ENCODE measurements at regions of chr19 and their contacts with region 1.

Region 1: DNA sequence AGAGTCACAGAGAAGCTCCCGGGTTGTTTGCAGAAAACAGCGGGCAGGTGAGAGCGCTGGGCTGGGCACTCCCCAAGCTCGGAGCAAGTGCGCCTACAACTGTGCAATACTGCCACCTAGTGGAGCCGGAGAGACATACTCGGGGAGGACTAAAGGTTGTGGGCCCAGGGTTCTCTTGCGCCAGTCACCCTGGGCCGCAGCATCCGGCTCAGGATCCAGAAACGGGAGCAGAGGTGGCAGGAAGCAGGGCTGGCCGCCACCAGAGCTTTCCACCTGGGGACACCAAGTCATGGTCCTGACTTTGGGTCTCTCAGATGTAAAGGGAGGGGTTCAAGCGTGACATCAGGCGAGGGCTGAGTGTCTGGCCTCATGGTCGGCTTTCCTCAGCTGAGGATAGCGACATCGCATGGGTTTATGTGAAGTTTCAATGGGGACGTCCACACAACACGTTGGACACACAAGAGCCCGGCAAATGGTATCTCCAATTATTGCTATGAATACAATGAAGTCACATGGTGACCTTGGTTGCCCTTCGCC is 11.2 kb upstream of the KLK4 start:
- DNase-seq: peak; percentile 65
- H3K4me3 ChIP-seq: no peak overlapping the region
- H3K27ac ChIP-seq: no peak overlapping the region
- H3K4me1 ChIP-seq: no peaks in the 10 kb centered on the region
- H3K27me3 ChIP-seq: peaks cover 0 to 3% of the 10 kb centered on the region in 2 experiments
- CTCF ChIP-seq: peak; percentile 83 to 84
- POLR2A ChIP-seq: no peak

Region 2: DNA sequence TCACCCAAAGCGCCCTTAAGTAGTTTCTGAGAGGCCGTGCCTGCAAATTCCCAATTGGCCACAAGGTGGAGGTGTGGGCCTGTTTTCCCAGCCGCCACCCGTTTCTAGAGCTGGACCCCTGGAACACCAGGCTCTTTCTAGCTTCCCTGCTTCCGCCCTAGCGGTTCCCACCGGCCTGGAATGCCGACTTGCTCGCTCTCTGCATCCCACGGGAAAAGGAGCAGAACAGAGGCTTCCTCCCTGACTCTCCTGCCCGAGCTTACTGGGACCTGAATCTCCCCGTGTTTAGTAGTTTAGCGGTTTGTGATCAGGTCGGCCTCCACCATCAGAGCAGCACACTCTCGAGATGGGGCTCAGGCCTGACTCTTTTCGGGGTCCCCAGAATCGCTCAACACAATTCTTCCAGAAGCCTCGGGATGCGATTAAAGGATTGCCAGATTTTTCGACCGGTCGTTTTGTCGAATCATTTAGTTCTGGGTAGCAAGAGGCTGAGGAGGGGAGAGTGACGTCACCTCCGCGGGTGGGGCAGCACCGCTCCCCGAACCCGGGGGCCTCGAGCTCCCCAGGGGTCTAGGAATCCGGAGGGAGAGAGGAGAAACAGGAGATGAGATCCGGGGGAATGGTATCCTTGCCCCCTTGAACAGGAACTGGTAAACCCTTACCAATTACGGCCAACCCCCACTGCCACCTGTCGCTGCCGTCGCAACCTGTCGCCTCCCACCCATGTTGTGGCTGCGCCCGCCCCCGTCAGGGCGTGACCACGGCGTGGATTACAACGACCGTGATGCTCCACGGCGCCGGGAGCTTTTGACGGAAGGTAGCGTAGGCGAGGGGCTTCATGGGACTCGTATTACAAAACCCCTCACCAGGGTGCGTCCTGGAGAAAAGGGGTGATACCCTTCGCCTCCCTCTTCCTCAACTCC is 564.9 kb before region 1 on chr19:
- CTCF ChIA-PET with region 1: interaction called, 17 read pairs
- POLR2A ChIA-PET with region 1: no interaction called
- dilution Hi-C with region 1: no loop called
- intact Hi-C with region 1: loop called (anchors 1 kb)
- DNase-seq: peak; percentile 72
- H3K4me3 ChIP-seq: peak overlapping the region; percentile 24 to 54 (median 31)
- H3K27ac ChIP-seq: peak overlapping the region; percentile 19
- H3K4me1 ChIP-seq: peaks cover 7% of the 10 kb centered on the region
- H3K27me3 ChIP-seq: peaks cover 0 to under 1% of the 10 kb centered on the region in 2 experiments
- CTCF ChIP-seq: peak; percentile 77 to 83
- POLR2A ChIP-seq: no peak

Region 3: GRCh38 chr19:50537762-50538230 is 384.6 kb before region 1 on chr19:
- CTCF ChIA-PET with region 1: interaction called, 129 read pairs
- POLR2A ChIA-PET with region 1: no interaction called
- dilution Hi-C with region 1: no loop called
- intact Hi-C with region 1: loop called (anchors 1 kb)
- DNase-seq: peak; percentile 83
- H3K4me3 ChIP-seq: no peak overlapping the region
- H3K27ac ChIP-seq: no peak overlapping the region
- H3K4me1 ChIP-seq: no peaks in the 10 kb centered on the region
- H3K27me3 ChIP-seq: peaks cover 0 to 2% of the 10 kb centered on the region in 2 experiments
- CTCF ChIP-seq: peak; percentile 93 to 97
- POLR2A ChIP-seq: no peak

Region 4: DNA sequence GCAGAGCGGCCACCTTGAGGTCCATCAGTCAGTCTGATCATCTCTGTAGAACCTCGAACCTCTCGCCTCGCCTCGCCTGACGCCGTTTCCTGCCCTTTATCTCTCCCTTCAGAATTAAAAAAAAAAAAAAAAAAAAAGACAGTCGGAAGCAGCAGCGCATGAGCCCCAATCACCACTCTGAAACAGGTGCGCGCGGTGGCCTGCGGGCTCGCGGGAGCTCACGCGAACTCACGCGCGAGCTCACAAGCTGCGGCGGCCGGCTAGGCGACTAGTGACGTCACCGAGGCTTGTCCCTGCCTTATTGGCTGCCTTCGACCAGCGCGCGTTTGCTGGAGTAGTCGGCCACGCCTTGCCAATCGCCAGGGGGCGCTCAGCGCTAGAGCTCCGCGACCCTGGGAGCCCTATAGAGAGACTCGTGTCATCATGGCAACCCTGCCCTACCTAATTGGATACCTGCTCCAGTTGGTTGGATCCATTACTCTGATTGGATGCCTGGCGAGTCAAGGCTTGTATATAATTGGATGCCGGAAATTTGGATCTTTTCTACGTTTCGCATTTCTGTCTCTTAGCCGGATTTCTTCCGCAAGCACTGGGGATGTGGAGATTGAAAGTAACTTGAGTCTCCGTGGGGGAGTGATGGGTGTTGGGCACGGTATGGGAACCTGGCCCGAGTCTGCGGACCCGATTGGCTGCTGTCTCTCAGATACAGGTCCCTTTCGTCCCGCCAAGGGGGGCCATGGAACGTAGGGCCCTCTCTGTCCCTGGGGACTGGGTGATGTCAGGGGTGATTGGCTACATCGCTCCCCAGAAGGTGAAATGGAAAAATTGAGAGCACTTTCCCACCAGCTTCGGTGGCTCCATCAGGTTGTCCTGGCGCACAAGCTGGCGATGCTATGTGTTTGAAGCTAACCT is 314.3 kb before region 1 on chr19:
- CTCF ChIA-PET with region 1: interaction called, 12 read pairs
- POLR2A ChIA-PET with region 1: no interaction called
- dilution Hi-C with region 1: no loop called
- intact Hi-C with region 1: loop called (anchors 5 kb)
- DNase-seq: peak; percentile 77
- H3K4me3 ChIP-seq: no peak overlapping the region
- H3K27ac ChIP-seq: no peak overlapping the region
- H3K4me1 ChIP-seq: no peaks in the 10 kb centered on the region
- H3K27me3 ChIP-seq: no peaks in the 10 kb centered on the region
- CTCF ChIP-seq: peak; percentile 75 to 83
- POLR2A ChIP-seq: no peak

Region 5: GRCh38 chr19:50705422-50706019 is 216.9 kb before region 1 on chr19:
- CTCF ChIA-PET with region 1: interaction called, 13 read pairs
- POLR2A ChIA-PET with region 1: no interaction called
- dilution Hi-C with region 1: no loop called
- intact Hi-C with region 1: loop called (anchors 5 kb)
- DNase-seq: peak; percentile 62
- H3K4me3 ChIP-seq: no peak overlapping the region
- H3K27ac ChIP-seq: no peak overlapping the region
- H3K4me1 ChIP-seq: peaks cover 18% of the 10 kb centered on the region
- H3K27me3 ChIP-seq: no peaks in the 10 kb centered on the region
- CTCF ChIP-seq: peak; percentile 72 to 81
- POLR2A ChIP-seq: no peak

Region 6: GRCh38 chr19:50823389-50824042 is 98.9 kb before region 1 on chr19 and contains the start of gene KLK1:
- CTCF ChIA-PET with region 1: no interaction called
- POLR2A ChIA-PET with region 1: no interaction called
- dilution Hi-C with region 1: no loop called
- intact Hi-C with region 1: no loop called
- DNase-seq: no peak
- H3K4me3 ChIP-seq: no peak within 1 kb of the TSS
- H3K27ac ChIP-seq: no peak within 1 kb of the TSS
- H3K4me1 ChIP-seq: no peaks in the 10 kb centered on the region
- H3K27me3 ChIP-seq: peaks cover 21% of the 10 kb centered on the region in 2 experiments
- CTCF ChIP-seq: no peak
- POLR2A ChIP-seq: no peak
- total RNA-seq, gene KLK1: not detected in 2 replicates

Region 7: DNA sequence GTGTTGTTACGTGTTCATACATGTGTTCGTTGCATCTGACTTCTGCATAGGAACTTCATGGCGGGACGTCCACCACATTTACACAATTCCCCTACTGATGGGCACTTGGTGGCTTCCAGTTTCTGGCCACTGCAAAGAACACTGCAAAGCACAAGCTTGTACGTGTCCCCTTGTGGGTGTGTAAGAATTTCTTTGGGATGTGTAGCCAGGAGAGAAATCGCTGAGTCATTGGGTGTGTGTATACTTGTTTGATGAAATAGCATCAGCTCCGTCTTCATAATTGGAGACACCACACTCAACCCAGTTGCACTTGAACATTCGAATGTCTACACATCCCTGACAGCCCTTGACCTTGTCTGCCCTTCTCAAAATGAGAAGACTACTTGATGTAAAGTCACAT is 11.3 kb after region 1 on chr19:
- CTCF ChIA-PET with region 1: interaction called, 20 read pairs
- POLR2A ChIA-PET with region 1: no interaction called
- dilution Hi-C with region 1: no loop called
- intact Hi-C with region 1: no loop called
- DNase-seq: no peak
- H3K4me3 ChIP-seq: no peak overlapping the region
- H3K27ac ChIP-seq: no peak overlapping the region
- H3K4me1 ChIP-seq: no peaks in the 10 kb centered on the region
- H3K27me3 ChIP-seq: peaks cover 0 to 2% of the 10 kb centered on the region in 2 experiments
- CTCF ChIP-seq: no peak
- POLR2A ChIP-seq: no peak

Region 8: DNA sequence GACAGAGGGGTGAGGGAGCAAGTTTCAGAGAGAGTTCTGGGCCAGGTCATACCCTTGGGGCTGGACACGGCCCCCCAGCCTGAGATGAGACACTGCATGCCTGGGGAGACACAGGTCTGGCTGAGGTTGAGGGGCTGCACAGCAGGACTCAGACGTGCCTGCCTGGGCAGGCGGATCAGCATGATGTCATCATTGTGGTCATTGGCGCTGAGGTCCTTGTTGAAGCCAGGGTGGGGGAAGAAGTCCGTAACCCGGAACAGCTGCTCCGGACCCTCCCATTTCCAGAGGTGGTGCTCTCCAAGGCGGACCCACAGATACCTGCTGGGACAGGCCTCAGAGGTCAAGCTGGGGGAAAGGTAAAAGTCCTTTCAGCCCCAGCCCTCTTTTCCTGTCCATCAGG is 84.0 kb after region 1 on chr19:
- CTCF ChIA-PET with region 1: no interaction called
- POLR2A ChIA-PET with region 1: no interaction called
- dilution Hi-C with region 1: no loop called
- intact Hi-C with region 1: no loop called
- DNase-seq: no peak
- H3K4me3 ChIP-seq: no peak overlapping the region
- H3K27ac ChIP-seq: no peak overlapping the region
- H3K4me1 ChIP-seq: no peaks in the 10 kb centered on the region
- H3K27me3 ChIP-seq: no peaks in the 10 kb centered on the region
- CTCF ChIP-seq: no peak
- POLR2A ChIP-seq: no peak

Region 9: DNA sequence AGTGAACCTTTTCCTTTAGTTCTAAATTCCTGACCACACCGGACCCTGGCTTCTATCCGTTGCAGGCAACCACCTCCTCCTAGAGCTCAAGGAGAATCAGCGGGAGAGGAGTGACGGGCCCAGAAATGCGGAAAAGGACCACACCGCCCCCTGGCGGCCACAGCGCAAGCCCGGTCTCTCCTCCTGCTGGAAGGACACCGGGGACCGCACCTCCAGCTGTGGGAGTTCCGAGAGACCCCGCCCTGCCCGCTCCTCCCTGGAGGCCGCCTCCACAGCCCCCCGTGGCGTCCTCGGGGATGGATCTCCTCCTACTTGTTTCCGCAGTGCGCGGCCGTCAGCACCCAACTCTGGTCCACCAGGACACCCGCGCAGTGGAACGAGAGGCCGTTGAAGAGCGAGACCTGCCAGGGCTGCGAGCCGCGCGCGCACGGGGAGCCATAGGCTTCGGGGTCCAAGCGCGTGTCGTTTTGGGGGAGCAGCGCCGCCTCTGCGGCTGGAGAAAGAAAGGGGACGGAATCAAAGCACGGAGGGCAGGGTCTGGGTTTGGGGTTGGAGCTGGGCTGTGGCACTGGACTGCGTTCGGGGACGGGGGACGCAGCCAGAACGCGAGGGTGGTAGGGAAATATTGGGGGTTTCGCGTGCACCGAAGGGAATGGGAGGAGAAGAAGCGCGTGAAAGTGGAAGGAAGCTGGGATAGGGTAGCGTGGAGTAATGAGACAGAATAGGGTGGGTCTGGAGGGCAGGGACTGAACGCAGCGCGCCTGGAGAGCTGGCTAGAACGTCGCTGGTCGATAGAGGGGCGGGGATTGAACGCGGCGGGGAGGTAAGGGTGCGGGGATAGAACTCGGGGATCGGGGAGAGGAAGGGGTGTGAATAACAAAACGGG is 94.7 kb after region 1 on chr19:
- CTCF ChIA-PET with region 1: interaction called, 12 read pairs
- POLR2A ChIA-PET with region 1: no interaction called
- dilution Hi-C with region 1: no loop called
- intact Hi-C with region 1: no loop called
- DNase-seq: peak; percentile 39
- H3K4me3 ChIP-seq: no peak overlapping the region
- H3K27ac ChIP-seq: no peak overlapping the region
- H3K4me1 ChIP-seq: no peaks in the 10 kb centered on the region
- H3K27me3 ChIP-seq: peaks cover 21 to 25% of the 10 kb centered on the region in 2 experiments
- CTCF ChIP-seq: peak; percentile 79 to 91
- POLR2A ChIP-seq: no peak

Measured in endothelial cell of umbilical vein (primary cell).